ENCODE measurements at regions of chr5 and their contacts with region 1.

Region 1: DNA sequence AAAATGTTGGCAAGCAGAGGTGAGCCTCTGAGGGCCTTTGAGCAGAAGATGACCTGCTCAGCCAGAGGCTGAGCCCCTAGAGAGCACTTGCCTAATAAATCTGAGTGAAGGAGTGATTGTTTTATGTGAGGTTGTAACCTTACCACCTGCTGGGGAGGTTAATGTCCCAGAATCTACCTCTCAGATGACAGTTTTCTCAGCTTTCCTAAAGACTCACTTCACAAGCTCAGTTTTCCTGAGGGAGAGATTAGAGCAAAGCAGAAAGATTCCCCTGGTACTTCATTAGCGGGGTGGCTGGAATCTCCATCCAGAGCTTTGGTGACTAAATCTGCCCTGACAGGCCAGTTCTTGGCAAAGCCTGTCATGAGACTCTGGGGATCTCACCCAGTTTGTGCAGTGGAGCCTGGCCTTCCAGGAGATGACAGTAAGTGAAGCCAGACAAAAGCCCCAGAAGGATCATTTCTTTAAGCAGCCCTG is 48.8 kb upstream of the GALNT10 start:
- DNase-seq: no peak

Region 2: GRCh38 chr5:154092356-154093141 is 49.2 kb before region 1 on chr5:
- intact Hi-C with region 1: loop called (anchors 10 kb)
- DNase-seq: no peak

Region 3: GRCh38 chr5:154162539-154163151 is 20.9 kb after region 1 on chr5:
- intact Hi-C with region 1: no loop called
- DNase-seq: no peak

Region 4: DNA sequence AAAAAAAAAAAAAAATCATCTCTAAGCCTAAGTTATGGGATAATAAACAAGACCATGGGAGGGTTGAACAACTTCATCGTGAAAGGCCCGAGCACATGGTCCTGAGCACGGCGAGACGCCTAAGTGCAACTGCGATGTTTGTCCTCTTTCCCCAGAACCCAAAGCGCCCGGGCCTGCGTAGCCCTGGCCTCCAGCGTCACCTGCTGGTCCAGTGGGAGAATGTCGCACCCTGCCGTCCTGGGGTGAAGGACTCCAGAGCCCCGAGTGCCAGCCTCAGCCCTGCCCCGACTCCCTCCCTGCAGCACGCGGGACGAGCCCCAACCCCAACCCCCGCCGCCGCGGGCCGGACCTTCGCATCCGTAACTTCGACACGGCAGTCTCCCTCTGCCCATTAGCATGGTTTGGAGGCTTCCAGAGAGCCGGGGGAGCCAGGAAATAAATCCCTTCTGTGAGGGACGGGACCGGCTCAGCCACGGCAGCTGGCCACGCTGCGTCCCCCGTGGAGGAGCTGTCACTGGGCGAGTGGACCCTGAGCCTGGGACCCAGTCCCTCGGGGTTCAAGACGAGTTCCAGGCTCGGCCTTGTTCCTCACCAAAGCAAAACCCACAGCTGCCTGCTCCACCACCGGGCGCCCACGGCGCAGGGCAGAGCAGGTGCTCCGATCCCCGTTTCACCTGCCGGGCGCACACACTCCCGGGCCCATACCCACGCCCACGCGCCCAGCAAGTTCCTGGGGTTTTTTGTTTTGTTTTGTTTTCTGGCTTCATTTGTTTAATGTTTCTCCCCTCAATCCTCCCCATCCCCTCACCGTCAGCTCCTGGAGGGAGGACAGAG is 468.8 kb after region 1 on chr5:
- intact Hi-C with region 1: no loop called
- DNase-seq: no peak